ENCODE measurements at regions of chr6 and their contacts with region 1.

Region 1: GRCh38 chr6:8102122-8102958 is at the start of gene EEF1E1:
- DNase-seq: peak; percentile 99
- ATAC-seq: peak; percentile 98
- H3K4me3 Mint-ChIP-seq: peak within 1 kb of the TSS; percentile 96
- H3K27ac Mint-ChIP-seq: peak within 1 kb of the TSS; percentile 97
- H3K4me1 Mint-ChIP-seq: peaks cover 31% of the 10 kb centered on the region
- H3K27me3 Mint-ChIP-seq: peaks cover 16% of the 10 kb centered on the region
- CTCF ChIP-seq: no peak
- total RNA-seq, gene EEF1E1: 73.7 to 76.8 TPM

Region 2: GRCh38 chr6:8063761-8064637 is 38.3 kb before region 1 on chr6 and contains the start of gene BLOC1S5:
- CTCF ChIA-PET with region 1: interaction called, 9 read pairs
- POLR2A ChIA-PET with region 1: interaction called, 11 read pairs
- intact Hi-C with region 1: loop called (anchors 5 kb)
- DNase-seq: peak; percentile 99
- ATAC-seq: peak; percentile 91
- H3K4me3 Mint-ChIP-seq: peak within 1 kb of the TSS; percentile 93
- H3K27ac Mint-ChIP-seq: peak within 1 kb of the TSS; percentile 95
- H3K4me1 Mint-ChIP-seq: peaks cover 27% of the 10 kb centered on the region
- H3K27me3 Mint-ChIP-seq: no peaks in the 10 kb centered on the region
- CTCF ChIP-seq: no peak
- total RNA-seq, gene BLOC1S5: 23.7 to 26.2 TPM

Region 3: DNA sequence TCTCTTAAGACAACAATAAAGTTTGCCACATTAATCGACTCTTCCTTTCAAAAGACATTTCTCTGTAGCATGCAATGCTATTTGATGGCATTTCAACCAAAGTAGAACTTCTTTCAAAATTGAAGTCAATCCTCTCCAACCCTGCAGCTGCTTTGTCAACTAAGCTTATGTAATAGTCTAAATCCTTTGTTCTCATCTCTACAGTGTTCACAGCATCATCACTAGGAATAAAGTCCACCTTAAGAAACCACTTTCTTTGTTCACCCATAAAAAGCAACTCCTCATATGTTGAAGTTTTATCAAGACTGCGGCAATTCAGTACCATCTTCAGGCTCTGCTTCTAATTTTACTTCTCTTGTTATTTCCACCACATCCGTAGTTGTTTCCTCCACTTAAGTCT is 26.6 kb before region 1 on chr6:
- CTCF ChIA-PET with region 1: no interaction called
- POLR2A ChIA-PET with region 1: no interaction called
- intact Hi-C with region 1: no loop called
- DNase-seq: no peak
- ATAC-seq: no peak
- H3K4me3 Mint-ChIP-seq: no peak overlapping the region
- H3K27ac Mint-ChIP-seq: no peak overlapping the region
- H3K4me1 Mint-ChIP-seq: peaks cover 16% of the 10 kb centered on the region
- H3K27me3 Mint-ChIP-seq: no peaks in the 10 kb centered on the region
- CTCF ChIP-seq: no peak

Region 4: GRCh38 chr6:8435160-8435852 is 333.0 kb after region 1 on chr6 and contains the start of gene SLC35B3:
- CTCF ChIA-PET with region 1: no interaction called
- POLR2A ChIA-PET with region 1: no interaction called
- intact Hi-C with region 1: loop called (anchors 10 kb)
- DNase-seq: peak; percentile 98
- ATAC-seq: peak; percentile 96
- H3K4me3 Mint-ChIP-seq: peak within 1 kb of the TSS; percentile 82
- H3K27ac Mint-ChIP-seq: peak within 1 kb of the TSS; percentile 93
- H3K4me1 Mint-ChIP-seq: peaks cover 32% of the 10 kb centered on the region
- H3K27me3 Mint-ChIP-seq: no peaks in the 10 kb centered on the region
- CTCF ChIP-seq: no peak
- total RNA-seq, gene SLC35B3: 7.1 to 7.8 TPM